ENCODE measurements at regions of chr1 and their contacts with region 1.

Region 1: DNA sequence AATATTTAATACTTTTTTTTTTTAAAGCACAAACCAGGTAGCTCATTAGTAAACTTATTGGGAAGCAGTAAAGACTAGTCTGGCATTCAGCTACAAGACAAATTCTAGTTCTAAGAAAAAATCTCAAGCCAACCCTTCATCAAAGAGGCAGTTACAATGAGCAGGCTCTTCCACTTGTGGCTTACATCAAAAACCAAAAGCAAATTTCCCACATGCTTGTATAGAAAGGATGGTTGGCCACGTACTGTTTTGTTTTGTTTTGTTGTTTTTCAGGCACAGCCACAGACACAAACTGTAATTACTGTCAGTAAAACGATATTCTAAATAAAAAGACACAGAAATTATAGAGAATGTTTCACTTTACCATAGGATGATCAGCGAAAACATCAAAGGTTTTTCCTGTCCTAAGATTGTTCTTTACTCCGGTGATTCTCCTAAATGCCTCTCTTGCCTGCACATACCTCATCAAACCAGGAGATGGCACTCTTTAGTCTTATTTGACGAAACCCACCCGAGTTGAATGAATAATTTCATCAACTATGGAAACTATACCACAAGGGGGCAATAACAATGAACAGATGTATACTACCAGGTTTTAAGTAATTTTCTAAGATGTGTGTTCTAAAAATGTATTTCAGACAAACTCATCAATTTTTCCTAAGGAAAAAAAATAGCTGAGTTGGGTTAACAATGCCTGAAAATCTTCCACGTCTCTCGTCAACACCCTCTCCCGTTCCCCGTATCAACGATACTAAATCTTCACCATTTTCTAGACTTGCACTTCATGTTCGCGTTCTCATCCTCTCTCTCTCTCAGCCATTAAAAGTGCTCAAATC is 26.9 kb downstream of the RPL5 start:
- DNase-seq: peak in 3 of 10 donors; percentile 26 to 78 (median 59)
- H3K4me3 ChIP-seq: peak overlapping the region in 55 of 59 donors; percentile 2 to 60 (median 43)
- H3K27ac ChIP-seq: peak overlapping the region; percentile 4 to 90 (median 83)
- H3K27me3 ChIP-seq: no peaks in the 10 kb centered on the region
- CTCF ChIP-seq: peak; percentile 90 to 100 (median 99)

Region 2: GRCh38 chr1:92476071-92476631 is 382.6 kb before region 1 on chr1:
- intact Hi-C with region 1: no loop called
- DNase-seq: no peak
- H3K4me3 ChIP-seq: no peak overlapping the region
- H3K27ac ChIP-seq: no peak overlapping the region
- H3K27me3 ChIP-seq: peaks cover 0 to 31% (median 21%) of the 10 kb centered on the region in 45 donors
- CTCF ChIP-seq: no peak

Region 3: GRCh38 chr1:92944901-92945747 is 86.3 kb after region 1 on chr1:
- intact Hi-C with region 1: loop called in 1 of 2 experiments (anchors 5 kb)
- DNase-seq: peak in 1 of 10 donors; percentile 56
- H3K4me3 ChIP-seq: peak overlapping the region in 22 of 59 donors; percentile 1 to 37 (median 14)
- H3K27ac ChIP-seq: peak overlapping the region; percentile 35 to 96 (median 90)
- H3K27me3 ChIP-seq: no peaks in the 10 kb centered on the region
- CTCF ChIP-seq: no peak

Region 4: GRCh38 chr1:92960395-92961130 is 101.8 kb after region 1 on chr1:
- intact Hi-C with region 1: loop called (anchors 1 kb)
- DNase-seq: peak in 9 of 10 donors; percentile 70 to 80 (median 78)
- H3K4me3 ChIP-seq: peak overlapping the region; percentile 64 to 98 (median 88)
- H3K27ac ChIP-seq: peak overlapping the region; percentile 91 to 99 (median 98)
- H3K27me3 ChIP-seq: no peaks in the 10 kb centered on the region
- CTCF ChIP-seq: peak; percentile 54 to 89 (median 79)

Region 5: GRCh38 chr1:92994105-92994712 is 135.4 kb after region 1 on chr1:
- intact Hi-C with region 1: loop called (anchors 1 to 2 kb)
- DNase-seq: peak in 5 of 10 donors; percentile 46 to 85 (median 69)
- H3K4me3 ChIP-seq: peak overlapping the region in 1 of 59 donors; percentile 8
- H3K27ac ChIP-seq: peak overlapping the region in 4 of 59 donors; percentile 35 to 58 (median 40)
- H3K27me3 ChIP-seq: no peaks in the 10 kb centered on the region
- CTCF ChIP-seq: peak; percentile 88 to 100 (median 94)